Caco-2 (cell line): ENCODE measurements at regions of chr5 and their contacts with region 1.

Region 1: DNA sequence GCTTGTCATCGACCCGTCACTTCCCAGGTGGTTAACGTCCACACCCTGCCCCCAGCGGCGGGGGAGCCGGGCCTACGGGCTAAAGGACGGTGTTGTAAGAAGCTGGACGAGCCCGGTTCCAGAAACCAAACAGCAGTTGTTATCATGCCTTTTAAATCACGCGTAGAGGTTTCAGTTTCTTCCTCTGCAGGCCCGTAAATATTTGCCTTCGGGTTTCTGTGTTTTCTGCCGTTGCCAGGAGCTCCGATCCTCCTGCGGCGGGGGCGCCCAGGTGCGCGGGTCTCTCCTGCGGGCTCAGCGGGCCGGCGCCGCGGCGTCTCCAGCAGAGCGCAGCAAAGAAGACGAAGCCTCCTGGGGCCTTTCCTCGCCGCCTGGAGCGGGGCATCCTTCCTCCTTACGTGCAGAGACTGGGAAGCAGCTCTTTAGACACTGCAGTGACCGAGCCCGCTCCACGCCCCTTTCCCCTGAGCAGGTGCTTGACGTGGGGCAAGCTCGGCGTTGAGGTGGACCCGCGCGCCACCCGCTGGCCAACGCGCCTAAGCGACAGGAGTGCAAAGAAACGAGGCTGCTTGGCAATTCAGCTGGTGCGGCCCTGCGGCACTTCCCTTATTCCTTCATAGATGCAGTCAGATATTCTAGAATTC is 21.8 kb upstream of the TTC1 start:
- DNase-seq: peak; percentile 88 to 90
- H3K4me3 ChIP-seq: peak overlapping the region; percentile 34
- H3K4me3 Mint-ChIP-seq: peak overlapping the region; percentile 64
- H3K27ac Mint-ChIP-seq: no peak overlapping the region
- H3K4me1 ChIP-seq: peaks cover 4% of the 10 kb centered on the region; the same call in 1 of the 2 replicates
- H3K4me1 Mint-ChIP-seq: no peaks in the 10 kb centered on the region
- H3K27me3 ChIP-seq: no peaks in the 10 kb centered on the region; the same call in none of the 2 replicates
- H3K27me3 Mint-ChIP-seq: peaks cover 28% of the 10 kb centered on the region
- CTCF ChIP-seq: peak; percentile 83 to 89

Region 2: GRCh38 chr5:159286420-159287035 is 700.6 kb before region 1 on chr5:
- CTCF ChIA-PET with region 1: interaction called, 11 read pairs
- POLR2A ChIA-PET with region 1: no interaction called
- intact Hi-C with region 1: loop called (anchors 5 kb)
- DNase-seq: peak in 1 of 2 experiments; percentile 12
- H3K4me3 ChIP-seq: no peak overlapping the region
- H3K4me3 Mint-ChIP-seq: no peak overlapping the region
- H3K27ac Mint-ChIP-seq: no peak overlapping the region
- H3K4me1 ChIP-seq: peaks cover 7% of the 10 kb centered on the region; the same call in 1 of the 2 replicates
- H3K4me1 Mint-ChIP-seq: no peaks in the 10 kb centered on the region
- H3K27me3 ChIP-seq: no peaks in the 10 kb centered on the region
- H3K27me3 Mint-ChIP-seq: no peaks in the 10 kb centered on the region
- CTCF ChIP-seq: peak; percentile 26 to 40

Region 3: GRCh38 chr5:159331093-159331973 is 655.8 kb before region 1 on chr5:
- CTCF ChIA-PET with region 1: no interaction called
- POLR2A ChIA-PET with region 1: no interaction called
- intact Hi-C with region 1: loop called (anchors 5 kb)
- DNase-seq: peak; percentile 55 to 64
- H3K4me3 ChIP-seq: peak overlapping the region; percentile 20; the same call in 1 of the 2 replicates
- H3K4me3 Mint-ChIP-seq: peak overlapping the region; percentile 69
- H3K27ac Mint-ChIP-seq: no peak overlapping the region
- H3K4me1 ChIP-seq: no peaks in the 10 kb centered on the region
- H3K4me1 Mint-ChIP-seq: no peaks in the 10 kb centered on the region
- H3K27me3 ChIP-seq: no peaks in the 10 kb centered on the region
- H3K27me3 Mint-ChIP-seq: peaks cover 11% of the 10 kb centered on the region
- CTCF ChIP-seq: peak; percentile 62 to 85

Region 4: DNA sequence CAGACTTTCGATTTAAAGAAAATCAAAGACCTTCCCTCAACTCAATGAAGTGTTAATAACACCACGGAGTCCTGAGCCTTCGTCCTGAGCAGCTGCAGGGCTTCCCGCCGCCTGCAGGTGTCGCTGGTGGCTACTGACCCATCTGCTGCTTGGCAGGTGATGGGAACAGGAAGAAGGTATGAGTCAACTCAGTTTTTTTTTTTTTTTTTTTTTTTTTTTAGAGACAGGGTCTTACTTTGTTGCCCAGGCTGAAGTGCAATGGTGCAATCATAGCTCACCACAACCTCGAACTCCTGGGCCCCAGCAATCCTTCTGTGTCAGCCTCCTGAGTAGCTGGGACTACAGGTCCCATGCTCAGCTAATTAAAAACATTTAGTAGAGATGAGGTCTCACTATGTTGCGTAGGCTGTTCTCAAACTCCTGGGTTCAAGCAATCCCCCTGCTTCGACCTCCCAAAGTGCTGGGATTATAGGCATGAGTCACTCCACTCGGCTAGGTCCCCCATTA is 471.2 kb before region 1 on chr5:
- CTCF ChIA-PET with region 1: interaction called, 3 read pairs
- POLR2A ChIA-PET with region 1: no interaction called
- intact Hi-C with region 1: loop called (anchors 2 kb)
- DNase-seq: peak; percentile 59 to 71
- H3K4me3 ChIP-seq: no peak overlapping the region
- H3K4me3 Mint-ChIP-seq: no peak overlapping the region
- H3K27ac Mint-ChIP-seq: no peak overlapping the region
- H3K4me1 ChIP-seq: peaks cover 1% of the 10 kb centered on the region; the same call in 1 of the 2 replicates
- H3K4me1 Mint-ChIP-seq: no peaks in the 10 kb centered on the region
- H3K27me3 ChIP-seq: no peaks in the 10 kb centered on the region; the same call in 1 of the 2 replicates
- H3K27me3 Mint-ChIP-seq: peaks cover 4% of the 10 kb centered on the region
- CTCF ChIP-seq: peak; percentile 73 to 89

Region 5: DNA sequence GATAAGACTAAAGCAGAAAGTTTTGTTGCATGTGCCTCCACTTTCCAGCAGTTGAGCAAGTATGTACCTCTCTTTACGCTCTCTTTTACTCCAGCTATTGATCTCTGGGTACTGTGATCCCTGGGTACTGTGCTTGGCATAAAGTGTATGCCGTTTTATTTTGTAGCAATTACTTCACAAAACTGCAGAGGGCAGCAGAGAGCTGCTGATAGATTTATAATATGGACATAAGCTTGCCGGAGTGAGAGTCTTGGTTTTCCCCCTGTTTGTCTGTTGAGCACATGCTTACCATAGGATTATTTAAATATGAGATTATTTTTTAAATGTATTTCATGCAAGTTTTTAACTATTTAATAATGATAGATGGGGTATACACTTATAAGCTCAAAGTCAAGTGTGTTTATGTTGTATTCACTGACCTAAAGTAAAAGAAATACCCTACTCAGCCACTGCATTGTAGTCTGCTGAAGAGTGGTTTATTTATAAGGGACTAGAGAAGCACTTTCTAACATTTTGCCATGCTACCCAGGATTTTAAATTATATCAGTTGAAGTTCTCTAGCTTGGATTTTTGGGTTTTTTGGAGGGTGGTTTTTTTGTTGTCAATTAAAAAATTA is 34.8 kb after region 1 on chr5:
- CTCF ChIA-PET with region 1: no interaction called
- POLR2A ChIA-PET with region 1: no interaction called
- intact Hi-C with region 1: no loop called
- DNase-seq: peak; percentile 56 to 71
- H3K4me3 ChIP-seq: no peak overlapping the region
- H3K4me3 Mint-ChIP-seq: no peak overlapping the region
- H3K27ac Mint-ChIP-seq: no peak overlapping the region
- H3K4me1 ChIP-seq: no peaks in the 10 kb centered on the region
- H3K4me1 Mint-ChIP-seq: peaks cover 7% of the 10 kb centered on the region
- H3K27me3 ChIP-seq: no peaks in the 10 kb centered on the region
- H3K27me3 Mint-ChIP-seq: no peaks in the 10 kb centered on the region
- CTCF ChIP-seq: peak; percentile 77 to 85